Activated CD4-positive, alpha-beta T cell treated with anti-CD3 and anti-CD28 coated beads, Interleukin-2, amount 10 ng/mL, durations not matched to agents 24 days and 14 days (primary cell): ENCODE measurements at regions of chrX and their contacts with region 1.

Region 1: GRCh38 chrX:56232221-56233082 is at the start of gene KLF8:
- DNase-seq: peak; percentile 82
- H3K4me3 Mint-ChIP-seq: peak within 1 kb of the TSS; percentile 88
- H3K27ac Mint-ChIP-seq: peak within 1 kb of the TSS; percentile 85
- H3K4me1 Mint-ChIP-seq: peaks cover 28% of the 10 kb centered on the region
- H3K27me3 Mint-ChIP-seq: no peaks in the 10 kb centered on the region
- total RNA-seq, gene KLF8: 5.2 and 5.9 TPM in 2 replicates

Region 2: DNA sequence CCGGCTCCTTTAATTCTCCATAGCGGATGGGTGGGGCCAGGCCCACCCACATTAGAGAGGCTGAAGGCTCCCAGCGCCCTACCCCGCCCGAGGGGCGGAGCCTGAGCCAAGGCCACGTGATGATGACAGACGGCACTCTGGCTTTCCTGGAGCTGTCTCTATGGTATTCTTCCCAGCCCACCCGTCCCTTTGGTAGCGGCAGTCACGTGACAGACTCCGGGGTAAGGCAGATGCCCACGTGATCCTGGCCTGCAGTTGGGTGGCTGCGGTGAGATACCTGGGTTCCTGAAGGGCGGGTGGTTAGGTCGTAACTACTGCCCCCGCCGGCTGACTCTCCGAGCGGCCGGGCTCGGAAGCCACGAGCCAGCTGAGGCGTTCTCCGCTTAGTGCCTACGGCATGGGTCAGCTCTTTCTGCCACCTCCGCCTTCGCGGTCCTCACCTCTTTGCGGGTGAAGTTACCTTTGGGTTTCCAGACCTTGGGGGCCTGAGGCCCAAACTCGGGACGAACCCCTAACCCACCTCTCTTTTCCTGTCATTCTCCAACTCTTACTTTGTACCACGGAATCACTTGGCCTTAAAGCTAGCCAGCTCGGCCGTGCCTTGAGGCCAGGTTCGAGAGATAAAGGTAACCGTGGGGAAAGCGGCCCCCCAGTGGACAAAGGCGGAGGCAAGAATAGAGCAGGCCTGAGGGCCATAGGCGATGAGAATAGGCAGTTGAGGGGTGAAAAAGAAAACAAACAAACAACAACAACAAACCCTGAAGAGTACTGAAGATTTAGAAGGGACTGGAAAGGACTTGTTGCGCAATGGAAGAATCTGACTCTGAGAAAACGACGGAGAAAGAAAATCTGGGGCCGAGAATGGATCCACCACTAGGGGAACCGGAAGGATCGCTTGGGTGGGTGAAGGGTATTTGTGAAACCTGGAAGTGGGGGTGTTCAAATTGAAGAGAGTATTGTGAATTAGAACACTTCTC is 514.6 kb before region 1 on chrX and contains the start of gene RRAGB:
- intact Hi-C with region 1: loop called (anchors 2 kb)
- DNase-seq: peak; percentile 96
- H3K4me3 Mint-ChIP-seq: peak within 1 kb of the TSS; percentile 93
- H3K27ac Mint-ChIP-seq: peak within 1 kb of the TSS; percentile 85
- H3K4me1 Mint-ChIP-seq: peaks cover 16% of the 10 kb centered on the region
- H3K27me3 Mint-ChIP-seq: no peaks in the 10 kb centered on the region
- total RNA-seq, gene RRAGB: 6.5 and 8.2 TPM in 2 replicates

Region 3: GRCh38 chrX:55907968-55908607 is 324.4 kb before region 1 on chrX:
- intact Hi-C with region 1: loop called (anchors 10 kb)
- DNase-seq: peak; percentile 82
- H3K4me3 Mint-ChIP-seq: peak overlapping the region; percentile 93
- H3K27ac Mint-ChIP-seq: peak overlapping the region; percentile 92
- H3K4me1 Mint-ChIP-seq: peaks cover 23% of the 10 kb centered on the region
- H3K27me3 Mint-ChIP-seq: no peaks in the 10 kb centered on the region

Region 4: DNA sequence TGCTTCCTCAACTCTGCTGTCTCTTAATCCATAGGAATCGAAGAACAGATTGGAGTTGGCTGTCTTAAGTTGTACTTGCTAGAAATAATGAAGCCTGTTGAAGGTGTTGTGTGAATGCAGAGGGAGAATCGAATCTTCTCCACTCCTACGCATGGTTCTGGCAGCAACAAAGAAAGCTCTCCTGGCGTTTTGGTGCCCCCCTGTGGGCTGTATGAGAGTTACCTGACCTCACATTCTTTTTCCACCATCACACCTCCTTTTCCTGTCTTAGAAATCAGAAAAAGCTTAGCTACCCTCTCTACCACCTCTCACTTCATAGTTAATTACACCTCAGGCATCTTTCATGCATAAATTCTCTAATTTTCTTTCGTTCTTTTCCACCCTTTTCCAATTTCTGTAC is 16.0 kb after region 1 on chrX:
- intact Hi-C with region 1: loop called (anchors 1 kb)
- DNase-seq: peak; percentile 83
- H3K4me3 Mint-ChIP-seq: no peak overlapping the region
- H3K27ac Mint-ChIP-seq: no peak overlapping the region
- H3K4me1 Mint-ChIP-seq: peaks cover 9% of the 10 kb centered on the region
- H3K27me3 Mint-ChIP-seq: no peaks in the 10 kb centered on the region

Region 5: DNA sequence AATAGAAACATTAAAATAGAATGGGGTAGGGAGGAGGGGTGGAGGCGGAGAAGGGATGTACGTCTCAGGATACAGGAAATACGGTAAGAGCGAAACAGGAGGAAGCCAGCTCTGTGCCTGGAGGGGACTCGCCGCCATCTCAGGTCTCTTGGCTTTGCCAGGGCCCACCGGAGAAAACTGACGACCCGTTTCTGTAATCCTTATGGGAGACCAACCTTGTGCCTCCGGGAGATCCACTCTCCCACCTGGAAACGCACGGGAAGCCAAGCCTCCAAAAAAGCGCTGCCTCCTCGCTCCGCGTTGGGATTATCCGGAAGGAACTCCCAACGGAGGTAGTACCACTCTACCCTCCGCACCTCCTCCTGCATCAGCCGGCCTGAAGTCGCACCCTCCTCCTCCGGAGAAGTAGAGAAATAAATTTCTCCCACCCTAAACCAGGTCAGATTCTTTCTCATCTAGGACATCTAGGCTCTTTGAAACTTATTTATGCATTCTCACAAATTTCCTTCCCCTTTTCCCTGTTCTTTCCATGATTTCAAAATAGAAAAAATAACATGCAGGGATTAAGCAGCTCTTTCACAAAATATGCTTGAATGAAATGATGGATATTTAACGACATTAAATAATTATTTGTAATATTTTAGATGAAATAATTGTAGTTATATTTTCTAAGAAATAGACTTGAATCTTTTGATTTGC is 496.8 kb after region 1 on chrX and contains the start of gene NBDY:
- intact Hi-C with region 1: no loop called
- DNase-seq: peak; percentile 75
- H3K4me3 Mint-ChIP-seq: peak within 1 kb of the TSS; percentile 94
- H3K27ac Mint-ChIP-seq: peak within 1 kb of the TSS; percentile 89
- H3K4me1 Mint-ChIP-seq: peaks cover 18% of the 10 kb centered on the region
- H3K27me3 Mint-ChIP-seq: no peaks in the 10 kb centered on the region
- total RNA-seq, gene NBDY: 29.8 and 29.9 TPM in 2 replicates